Activated B cell treated with CpG ODN at 0.5 μM for 24 hours (primary cell): ENCODE measurements at regions of chr15 and their contacts with region 1.

Region 1: GRCh38 chr15:50354838-50355618 is at the start of gene GABPB1:
- DNase-seq: peak; percentile 87
- ATAC-seq: peak; percentile 55
- H3K4me3 Mint-ChIP-seq: peak within 1 kb of the TSS; percentile 98
- H3K27ac Mint-ChIP-seq: peak within 1 kb of the TSS; percentile 99
- H3K4me1 Mint-ChIP-seq: peaks cover 69% of the 10 kb centered on the region
- H3K27me3 Mint-ChIP-seq: no peaks in the 10 kb centered on the region
- CTCF ChIP-seq: no peak
- total RNA-seq, gene GABPB1: 32.5 and 32.7 TPM in 2 replicates

Region 2: GRCh38 chr15:48810414-48811317 is 1544.4 kb before region 1 on chr15 and contains the start of gene CEP152:
- CTCF ChIA-PET with region 1: interaction called, 3 read pairs
- POLR2A ChIA-PET with region 1: interaction called, 4 read pairs
- intact Hi-C with region 1: loop called (anchors 1 kb)
- DNase-seq: peak; percentile 93
- ATAC-seq: peak; percentile 96
- H3K4me3 Mint-ChIP-seq: peak within 1 kb of the TSS; percentile 94
- H3K27ac Mint-ChIP-seq: peak within 1 kb of the TSS; percentile 86
- H3K4me1 Mint-ChIP-seq: peaks cover 24% of the 10 kb centered on the region
- H3K27me3 Mint-ChIP-seq: peaks cover 3% of the 10 kb centered on the region
- CTCF ChIP-seq: no peak
- total RNA-seq, gene CEP152: 12.1 and 15.4 TPM in 2 replicates

Region 3: DNA sequence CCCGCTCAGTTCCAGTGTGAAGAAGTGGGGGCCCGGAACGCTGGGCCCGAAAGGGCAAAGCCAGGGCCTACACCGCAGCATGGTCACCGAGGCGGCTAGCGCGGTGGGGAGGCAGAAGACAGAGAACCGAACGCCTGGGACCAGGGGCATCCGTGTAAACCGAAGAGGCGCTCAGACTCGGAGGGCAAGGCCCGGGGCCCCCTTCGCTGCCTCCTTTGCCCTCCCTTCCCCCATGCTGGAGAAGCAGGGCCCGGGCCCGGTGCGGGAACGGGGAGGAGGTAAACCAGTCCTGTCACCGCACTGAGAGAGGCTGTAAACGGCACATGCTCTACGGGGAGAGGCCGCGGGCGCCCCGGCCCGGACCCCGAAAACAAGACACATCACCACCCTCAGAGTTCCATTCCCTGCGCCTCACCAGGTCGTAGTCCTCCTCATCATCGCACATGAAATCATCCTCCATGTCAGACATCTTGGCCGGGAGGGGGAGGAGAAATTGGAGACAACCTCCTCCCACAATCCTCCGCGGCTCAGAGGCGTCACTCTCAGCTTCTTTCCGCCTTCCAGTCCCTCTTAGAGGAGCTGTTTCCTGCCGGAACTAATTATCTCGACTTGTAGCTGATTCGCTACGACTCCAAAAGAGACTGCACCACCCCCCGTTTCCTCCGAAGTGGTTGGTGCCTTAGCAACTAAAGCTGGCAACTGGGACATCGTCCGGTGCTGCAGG is 1199.8 kb before region 1 on chr15 and contains the start of gene COPS2:
- CTCF ChIA-PET with region 1: no interaction called
- POLR2A ChIA-PET with region 1: interaction called, 14 read pairs
- intact Hi-C with region 1: loop called (anchors 1 kb)
- DNase-seq: peak; percentile 78
- ATAC-seq: peak; percentile 93
- H3K4me3 Mint-ChIP-seq: peak within 1 kb of the TSS; percentile 95
- H3K27ac Mint-ChIP-seq: peak within 1 kb of the TSS; percentile 95
- H3K4me1 Mint-ChIP-seq: peaks cover 43% of the 10 kb centered on the region
- H3K27me3 Mint-ChIP-seq: no peaks in the 10 kb centered on the region
- CTCF ChIP-seq: no peak
- total RNA-seq, gene COPS2: 53.1 and 54.4 TPM in 2 replicates

Region 4: DNA sequence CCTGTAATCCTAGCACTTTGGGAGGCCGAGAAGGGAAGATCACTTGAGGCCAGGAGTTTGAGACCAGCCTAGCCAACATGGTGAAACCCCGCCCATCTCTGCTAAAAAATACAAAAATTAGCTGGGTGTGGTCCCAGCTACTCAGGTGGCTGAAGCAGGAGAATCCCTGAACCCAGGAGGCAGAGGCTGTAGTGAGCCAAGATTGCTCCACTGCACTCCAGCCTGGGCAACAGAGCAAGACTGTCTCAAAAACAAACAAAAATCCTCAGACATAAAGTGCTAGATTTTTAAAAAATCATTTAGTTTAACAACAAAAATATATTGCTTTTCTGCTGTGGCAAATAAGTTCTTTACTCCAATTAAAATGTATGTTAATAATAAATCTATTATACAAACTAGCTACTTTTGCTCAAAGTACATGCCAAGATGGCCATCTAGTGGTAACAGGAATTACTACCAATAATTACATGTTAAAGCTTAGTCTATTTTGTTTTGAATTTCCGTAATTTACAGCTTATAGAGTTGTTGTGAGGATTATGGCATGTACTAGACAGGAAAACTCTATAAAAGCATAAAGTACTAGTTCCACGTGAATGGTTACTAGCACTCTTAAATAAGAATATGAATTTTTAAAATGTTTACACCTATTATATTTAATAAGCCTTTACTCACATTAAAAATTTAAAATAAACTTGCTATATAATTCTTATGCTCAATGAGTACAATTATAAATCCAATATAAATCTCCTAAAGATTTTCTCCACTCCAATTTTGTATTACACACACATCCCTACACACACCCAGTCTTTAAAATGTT is 39.0 kb before region 1 on chr15:
- CTCF ChIA-PET with region 1: interaction called, 5 read pairs
- POLR2A ChIA-PET with region 1: interaction called, 10 read pairs
- intact Hi-C with region 1: loop called (anchors 5 kb)
- DNase-seq: no peak
- ATAC-seq: peak; percentile 54
- H3K4me3 Mint-ChIP-seq: no peak overlapping the region
- H3K27ac Mint-ChIP-seq: no peak overlapping the region
- H3K4me1 Mint-ChIP-seq: peaks cover 7% of the 10 kb centered on the region
- H3K27me3 Mint-ChIP-seq: no peaks in the 10 kb centered on the region
- CTCF ChIP-seq: no peak

Region 5: DNA sequence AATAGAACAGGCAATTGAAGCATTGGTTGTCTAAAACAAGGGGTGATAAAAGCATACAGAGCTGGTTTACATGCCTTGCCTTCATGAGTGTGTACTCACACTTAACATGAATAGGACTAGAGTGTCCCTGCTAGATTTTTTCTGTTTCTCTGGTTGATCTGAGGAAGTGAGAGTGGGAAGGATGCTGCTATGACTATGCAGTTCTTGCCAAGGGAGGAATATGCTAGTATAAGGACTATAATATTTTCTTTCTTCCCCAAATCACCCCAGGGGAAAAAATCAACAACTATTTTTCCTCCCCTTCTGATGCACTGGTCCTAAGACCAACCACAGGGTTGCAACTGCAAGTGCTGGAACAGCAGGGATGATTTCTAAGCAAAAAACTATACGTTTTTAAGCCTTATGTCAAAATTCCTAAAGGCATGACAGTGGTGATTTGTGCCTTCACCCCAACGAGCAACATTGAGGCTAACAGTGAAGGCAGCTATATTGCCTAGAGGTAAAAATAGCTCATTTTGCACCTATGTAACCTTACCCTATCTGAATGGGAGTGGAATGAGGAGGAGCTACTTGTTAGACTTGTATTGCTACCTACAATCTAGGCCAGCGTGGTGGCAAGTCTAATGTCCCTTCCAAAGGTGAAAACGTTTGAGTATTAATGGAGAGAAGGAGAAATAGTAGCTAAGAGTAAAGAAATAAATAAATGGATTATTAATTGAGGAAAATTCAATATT is 35.7 kb after region 1 on chr15:
- CTCF ChIA-PET with region 1: no interaction called
- POLR2A ChIA-PET with region 1: interaction called, 11 read pairs
- intact Hi-C with region 1: loop called (anchors 5 kb)
- DNase-seq: no peak
- ATAC-seq: peak; percentile 65
- H3K4me3 Mint-ChIP-seq: no peak overlapping the region
- H3K27ac Mint-ChIP-seq: peak overlapping the region; percentile 8
- H3K4me1 Mint-ChIP-seq: peaks cover 8% of the 10 kb centered on the region
- H3K27me3 Mint-ChIP-seq: no peaks in the 10 kb centered on the region
- CTCF ChIP-seq: no peak

Region 6: GRCh38 chr15:50484781-50485180 is 129.8 kb after region 1 on chr15:
- CTCF ChIA-PET with region 1: no interaction called
- POLR2A ChIA-PET with region 1: interaction called, 12 read pairs
- intact Hi-C with region 1: loop called (anchors 5 kb)
- DNase-seq: no peak
- ATAC-seq: peak; percentile 78
- H3K4me3 Mint-ChIP-seq: no peak overlapping the region
- H3K27ac Mint-ChIP-seq: peak overlapping the region; percentile 54
- H3K4me1 Mint-ChIP-seq: peaks cover 39% of the 10 kb centered on the region
- H3K27me3 Mint-ChIP-seq: no peaks in the 10 kb centered on the region
- CTCF ChIP-seq: no peak

Region 7: DNA sequence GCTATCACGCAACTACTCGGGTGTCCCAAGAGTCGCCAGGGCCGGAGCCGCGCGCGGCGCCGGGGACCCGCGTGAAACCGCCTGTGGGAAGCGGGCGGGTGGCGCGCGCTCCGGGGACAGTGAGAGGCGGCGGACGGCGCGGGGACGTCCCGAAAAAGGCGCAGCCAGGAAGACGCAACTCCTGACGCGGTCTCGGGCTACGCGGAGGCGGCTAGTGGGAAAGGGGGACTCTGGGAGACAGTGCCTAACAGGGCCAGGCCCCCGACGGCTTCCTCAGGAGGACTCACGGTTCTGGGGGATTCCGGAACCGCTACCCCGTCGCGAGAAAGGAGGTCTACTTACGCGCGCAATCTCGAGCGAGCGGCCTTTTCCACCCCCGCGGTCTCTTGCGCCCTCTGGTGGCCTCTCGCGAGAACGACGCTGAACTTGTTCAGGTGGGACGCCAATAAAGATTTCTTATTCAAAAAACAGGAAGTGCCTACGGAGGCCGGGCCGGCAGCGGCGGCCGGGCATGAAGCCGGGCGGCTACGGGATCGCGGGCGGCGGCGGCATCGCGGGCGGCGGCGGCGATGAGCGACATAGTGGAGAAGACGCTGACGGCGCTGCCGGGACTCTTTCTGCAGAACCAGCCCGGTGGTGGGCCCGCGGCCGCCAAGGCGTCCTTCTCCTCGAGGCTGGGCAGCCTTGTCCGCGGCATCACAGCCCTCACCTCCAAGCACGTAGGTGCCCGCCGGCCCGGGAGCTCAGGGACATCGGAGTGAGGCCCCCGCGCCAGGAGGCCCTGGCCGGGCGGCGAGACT is 553.4 kb after region 1 on chr15 and contains the start of gene AP4E1:
- CTCF ChIA-PET with region 1: no interaction called
- POLR2A ChIA-PET with region 1: interaction called, 13 read pairs
- intact Hi-C with region 1: loop called (anchors 1 kb)
- DNase-seq: peak; percentile 93
- ATAC-seq: peak; percentile 58
- H3K4me3 Mint-ChIP-seq: peak within 1 kb of the TSS; percentile 91
- H3K27ac Mint-ChIP-seq: peak within 1 kb of the TSS; percentile 97
- H3K4me1 Mint-ChIP-seq: peaks cover 40% of the 10 kb centered on the region
- H3K27me3 Mint-ChIP-seq: no peaks in the 10 kb centered on the region
- CTCF ChIP-seq: no peak
- total RNA-seq, gene AP4E1: 11.1 and 13.4 TPM in 2 replicates